HEK293 (cell line): ENCODE measurements at regions of chr10 and their contacts with region 1.

Region 1: DNA sequence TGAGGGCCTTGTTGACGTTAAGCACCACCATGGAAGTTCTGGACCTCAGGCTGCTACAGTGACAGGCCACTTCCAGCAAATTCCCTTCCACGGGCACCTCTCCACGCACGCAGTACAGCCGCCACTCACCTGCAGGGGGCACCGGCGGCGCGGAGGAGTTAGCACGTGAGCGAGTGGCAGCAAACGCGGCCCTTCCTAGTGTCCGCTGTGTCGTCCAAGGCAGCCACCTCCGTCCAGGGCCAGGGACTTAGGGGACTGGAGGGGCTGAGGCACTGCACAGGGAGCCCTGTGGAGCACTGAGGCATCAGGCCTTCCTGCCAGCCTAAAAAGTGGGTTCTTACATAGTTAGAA is 164.4 kb downstream of the SVIL start:
- H3K4me3 ChIP-seq: no peak overlapping the region
- H3K27ac ChIP-seq: no peak overlapping the region
- H3K4me1 ChIP-seq: no peaks in the 10 kb centered on the region
- CTCF ChIP-seq: no peak

Region 2: GRCh38 chr10:29041616-29042015 is 428.7 kb before region 1 on chr10:
- CTCF ChIA-PET with region 1: no interaction called
- POLR2A ChIA-PET with region 1: no interaction called
- H3K4me3 ChIP-seq: no peak overlapping the region
- H3K27ac ChIP-seq: no peak overlapping the region
- H3K4me1 ChIP-seq: no peaks in the 10 kb centered on the region
- CTCF ChIP-seq: no peak

Region 3: GRCh38 chr10:29482591-29483431 is 12.5 kb after region 1 on chr10:
- CTCF ChIA-PET with region 1: interaction called, 10 read pairs
- POLR2A ChIA-PET with region 1: no interaction called
- H3K4me3 ChIP-seq: no peak overlapping the region
- H3K27ac ChIP-seq: no peak overlapping the region
- H3K4me1 ChIP-seq: no peaks in the 10 kb centered on the region
- CTCF ChIP-seq: no peak

Region 4: DNA sequence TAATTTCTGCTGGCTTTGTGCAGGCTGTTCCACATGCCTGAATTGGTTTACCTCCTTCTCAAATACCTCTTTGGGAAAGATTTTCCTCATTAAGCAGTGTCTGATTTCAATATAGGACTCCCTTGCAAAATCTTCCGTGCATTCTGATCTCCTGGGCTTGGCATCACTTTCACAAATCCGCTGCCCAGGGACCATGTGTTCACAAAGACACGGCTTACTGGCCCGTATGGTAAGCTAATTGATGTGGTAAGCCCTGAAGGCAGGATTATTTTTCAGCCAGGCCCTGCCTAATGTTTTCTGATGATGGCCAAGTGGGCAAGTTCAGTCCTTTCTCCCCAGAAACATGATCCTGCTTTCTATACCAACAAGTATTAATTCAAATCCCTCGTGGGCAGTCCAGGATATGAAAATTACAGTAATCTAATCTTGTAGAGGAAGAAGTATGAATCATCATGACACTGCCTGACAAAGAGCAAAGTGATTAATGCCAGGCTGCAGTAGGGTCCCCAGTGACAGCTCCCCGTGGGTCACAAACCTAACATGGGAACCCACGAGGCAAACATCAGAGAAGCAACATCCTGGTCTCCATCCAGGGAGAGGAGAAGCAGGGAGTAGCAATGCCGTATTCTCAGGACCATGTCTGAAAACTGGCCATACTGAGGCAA is 176.0 kb after region 1 on chr10:
- CTCF ChIA-PET with region 1: no interaction called
- POLR2A ChIA-PET with region 1: no interaction called
- H3K4me3 ChIP-seq: no peak overlapping the region
- H3K27ac ChIP-seq: peak overlapping the region; percentile 61
- H3K4me1 ChIP-seq: peaks cover 37% of the 10 kb centered on the region
- CTCF ChIP-seq: no peak